CD8-positive, alpha-beta T cell (primary cell): ENCODE measurements at regions of chr4 and their contacts with region 1.

Region 1: GRCh38 chr4:74886490-74886889 is 46.4 kb upstream of the PARM1 start:
- DNase-seq: no peak
- ATAC-seq: no peak
- H3K4me3 ChIP-seq: no peak overlapping the region
- H3K4me3 Mint-ChIP-seq: no peak overlapping the region
- H3K27ac ChIP-seq: no peak overlapping the region
- H3K27ac Mint-ChIP-seq: no peak overlapping the region
- H3K4me1 ChIP-seq: no peaks in the 10 kb centered on the region
- H3K4me1 Mint-ChIP-seq: no peaks in the 10 kb centered on the region
- H3K27me3 ChIP-seq: no peaks in the 10 kb centered on the region
- H3K27me3 Mint-ChIP-seq: peaks cover 3% of the 10 kb centered on the region
- CTCF ChIP-seq: no peak

Region 2: GRCh38 chr4:74874753-74875367 is 11.6 kb before region 1 on chr4:
- CTCF ChIA-PET with region 1: interaction called, 27 read pairs
- POLR2A ChIA-PET with region 1: interaction called, 3 read pairs
- intact Hi-C with region 1: no loop called
- DNase-seq: peak in 4 of 9 experiments; percentile 5 to 68 (median 35)
- ATAC-seq: peak; percentile 61
- H3K4me3 ChIP-seq: no peak overlapping the region
- H3K4me3 Mint-ChIP-seq: no peak overlapping the region
- H3K27ac ChIP-seq: no peak overlapping the region
- H3K27ac Mint-ChIP-seq: no peak overlapping the region
- H3K4me1 ChIP-seq: no peaks in the 10 kb centered on the region
- H3K4me1 Mint-ChIP-seq: no peaks in the 10 kb centered on the region
- H3K27me3 ChIP-seq: no peaks in the 10 kb centered on the region
- H3K27me3 Mint-ChIP-seq: peaks cover 12% of the 10 kb centered on the region
- CTCF ChIP-seq: peak; percentile 76

Region 3: DNA sequence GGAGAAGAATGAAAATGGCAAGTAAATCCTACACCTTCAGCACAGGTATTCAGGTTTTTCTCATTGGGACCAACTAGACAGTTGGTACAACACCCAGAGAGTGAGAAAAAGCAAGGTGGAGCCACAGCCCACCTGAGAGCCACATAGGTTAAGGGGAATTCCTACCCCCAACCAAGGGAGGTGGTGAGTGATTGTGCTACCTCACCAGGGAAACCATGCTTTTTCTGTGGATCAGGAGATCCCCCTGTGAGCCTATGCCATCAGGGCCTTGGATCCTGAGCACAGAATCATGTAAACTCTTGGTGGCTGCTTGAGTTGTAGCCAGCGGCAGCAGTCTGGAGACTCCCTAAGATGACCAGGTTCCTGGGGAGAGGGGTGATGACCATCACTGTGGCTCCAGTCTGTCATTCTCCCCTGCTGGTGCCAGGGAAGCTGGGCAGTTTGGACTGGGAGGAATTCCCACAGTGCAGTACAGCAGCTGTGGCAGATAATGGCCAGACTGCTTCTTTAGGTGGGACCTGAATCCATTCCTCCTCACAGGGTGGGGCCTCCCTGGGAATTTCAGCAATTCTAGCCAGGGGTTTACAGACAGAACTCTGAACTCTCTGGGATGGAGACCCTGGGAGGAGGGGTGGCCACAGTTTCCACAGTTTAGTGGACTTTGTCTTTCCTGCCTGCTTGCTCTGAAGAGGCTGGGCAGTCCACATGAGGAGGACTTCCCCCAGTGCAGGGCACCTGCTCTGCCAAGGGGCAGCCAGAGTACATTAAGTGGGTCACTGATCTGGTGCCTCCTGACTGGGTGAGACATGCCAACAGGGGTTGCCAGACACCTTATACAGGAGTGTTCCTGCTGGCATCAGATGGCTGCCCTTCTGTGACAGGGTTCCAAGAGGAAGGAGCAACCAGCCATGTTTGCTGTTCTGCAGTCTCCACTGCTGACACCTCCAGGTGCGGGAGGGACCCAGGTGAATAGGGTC is 89.6 kb after region 1 on chr4:
- CTCF ChIA-PET with region 1: no interaction called
- POLR2A ChIA-PET with region 1: no interaction called
- intact Hi-C with region 1: no loop called
- DNase-seq: no peak
- ATAC-seq: no peak
- H3K4me3 ChIP-seq: no peak overlapping the region
- H3K4me3 Mint-ChIP-seq: no peak overlapping the region
- H3K27ac ChIP-seq: no peak overlapping the region
- H3K27ac Mint-ChIP-seq: no peak overlapping the region
- H3K4me1 ChIP-seq: no peaks in the 10 kb centered on the region
- H3K4me1 Mint-ChIP-seq: no peaks in the 10 kb centered on the region
- H3K27me3 ChIP-seq: no peaks in the 10 kb centered on the region
- H3K27me3 Mint-ChIP-seq: peaks cover 2% of the 10 kb centered on the region
- CTCF ChIP-seq: no peak

Region 4: DNA sequence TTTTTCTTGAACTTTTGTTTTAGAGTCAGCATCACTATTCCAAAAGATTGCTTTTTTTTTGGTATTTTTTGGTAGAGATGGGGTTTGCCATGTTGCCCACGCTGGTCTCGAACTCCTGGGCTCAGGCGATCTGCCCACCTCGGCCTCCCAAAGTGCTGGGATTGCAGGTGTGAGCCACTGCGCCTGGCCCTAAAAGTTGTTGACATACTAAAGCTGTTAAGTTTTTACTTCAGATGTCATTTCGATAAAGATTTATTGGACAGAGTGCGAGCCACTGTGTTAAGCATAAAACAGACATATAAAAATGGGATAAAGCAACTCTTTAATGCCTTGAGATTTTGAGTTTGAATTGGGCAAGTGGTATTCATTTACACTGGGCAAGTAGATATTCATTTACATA is 866.1 kb after region 1 on chr4:
- CTCF ChIA-PET with region 1: no interaction called
- POLR2A ChIA-PET with region 1: no interaction called
- intact Hi-C with region 1: no loop called
- DNase-seq: no peak
- ATAC-seq: no peak
- H3K4me3 ChIP-seq: no peak overlapping the region
- H3K4me3 Mint-ChIP-seq: no peak overlapping the region
- H3K27ac ChIP-seq: no peak overlapping the region
- H3K27ac Mint-ChIP-seq: no peak overlapping the region
- H3K4me1 ChIP-seq: no peaks in the 10 kb centered on the region
- H3K4me1 Mint-ChIP-seq: peaks cover 2% of the 10 kb centered on the region
- H3K27me3 ChIP-seq: no peaks in the 10 kb centered on the region
- H3K27me3 Mint-ChIP-seq: no peaks in the 10 kb centered on the region
- CTCF ChIP-seq: no peak